AG04450 (cell line): ENCODE measurements at regions of chr3 and their contacts with region 1.

Region 1: GRCh38 chr3:170961616-170962400 is 53.4 kb upstream of the EIF5A2 start:
- DNase-seq: peak; percentile 10
- H3K4me3 ChIP-seq: no peak overlapping the region
- H3K27ac ChIP-seq: no peak overlapping the region
- H3K27me3 ChIP-seq: no peaks in the 10 kb centered on the region
- CTCF ChIP-seq: peak; percentile 65

Region 2: GRCh38 chr3:170809021-170809974 is 152.5 kb before region 1 on chr3:
- CTCF ChIA-PET with region 1: no interaction called
- POLR2A ChIA-PET with region 1: no interaction called
- DNase-seq: peak; percentile 48
- H3K4me3 ChIP-seq: no peak overlapping the region
- H3K27ac ChIP-seq: no peak overlapping the region
- H3K27me3 ChIP-seq: no peaks in the 10 kb centered on the region
- CTCF ChIP-seq: peak; percentile 83

Region 3: DNA sequence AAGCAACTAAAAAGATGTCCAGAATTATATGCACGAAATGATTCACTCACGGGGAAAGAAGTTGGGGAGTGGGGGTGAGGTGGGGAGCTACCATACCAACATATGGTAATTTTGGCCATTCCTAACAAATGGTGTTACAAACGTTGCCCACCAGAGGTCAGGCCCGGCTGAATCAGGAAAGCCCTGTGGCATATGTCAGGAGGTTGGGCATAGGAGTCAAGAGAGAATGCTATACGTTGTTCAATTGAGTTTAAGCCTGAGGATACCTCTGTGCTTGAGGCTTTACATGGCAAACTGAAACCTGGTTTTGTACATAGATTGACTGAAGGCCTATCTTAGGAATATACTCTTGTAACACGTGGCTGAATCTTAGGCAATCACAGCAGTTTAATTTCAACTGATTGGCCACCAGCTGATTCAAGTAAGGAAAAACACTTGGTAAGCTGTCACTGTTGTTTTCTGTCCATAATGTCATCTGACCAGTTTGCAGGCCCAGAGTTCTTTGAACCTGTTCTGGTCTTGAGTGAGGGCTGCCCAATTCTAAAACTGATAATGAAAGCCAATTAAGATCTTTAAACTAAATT is 88.1 kb after region 1 on chr3:
- CTCF ChIA-PET with region 1: interaction called, 27 read pairs
- POLR2A ChIA-PET with region 1: no interaction called
- DNase-seq: no peak
- H3K4me3 ChIP-seq: no peak overlapping the region
- H3K27ac ChIP-seq: no peak overlapping the region
- H3K27me3 ChIP-seq: no peaks in the 10 kb centered on the region
- CTCF ChIP-seq: peak; percentile 77

Region 4: GRCh38 chr3:171187706-171188290 is 226.0 kb after region 1 on chr3:
- CTCF ChIA-PET with region 1: interaction called, 15 read pairs
- POLR2A ChIA-PET with region 1: no interaction called
- DNase-seq: no peak
- H3K4me3 ChIP-seq: no peak overlapping the region
- H3K27ac ChIP-seq: no peak overlapping the region
- H3K27me3 ChIP-seq: no peaks in the 10 kb centered on the region
- CTCF ChIP-seq: peak; percentile 77